CD4-positive, alpha-beta T cell (primary cell): ENCODE measurements at regions of chr4 and their contacts with region 1.

Region 1: DNA sequence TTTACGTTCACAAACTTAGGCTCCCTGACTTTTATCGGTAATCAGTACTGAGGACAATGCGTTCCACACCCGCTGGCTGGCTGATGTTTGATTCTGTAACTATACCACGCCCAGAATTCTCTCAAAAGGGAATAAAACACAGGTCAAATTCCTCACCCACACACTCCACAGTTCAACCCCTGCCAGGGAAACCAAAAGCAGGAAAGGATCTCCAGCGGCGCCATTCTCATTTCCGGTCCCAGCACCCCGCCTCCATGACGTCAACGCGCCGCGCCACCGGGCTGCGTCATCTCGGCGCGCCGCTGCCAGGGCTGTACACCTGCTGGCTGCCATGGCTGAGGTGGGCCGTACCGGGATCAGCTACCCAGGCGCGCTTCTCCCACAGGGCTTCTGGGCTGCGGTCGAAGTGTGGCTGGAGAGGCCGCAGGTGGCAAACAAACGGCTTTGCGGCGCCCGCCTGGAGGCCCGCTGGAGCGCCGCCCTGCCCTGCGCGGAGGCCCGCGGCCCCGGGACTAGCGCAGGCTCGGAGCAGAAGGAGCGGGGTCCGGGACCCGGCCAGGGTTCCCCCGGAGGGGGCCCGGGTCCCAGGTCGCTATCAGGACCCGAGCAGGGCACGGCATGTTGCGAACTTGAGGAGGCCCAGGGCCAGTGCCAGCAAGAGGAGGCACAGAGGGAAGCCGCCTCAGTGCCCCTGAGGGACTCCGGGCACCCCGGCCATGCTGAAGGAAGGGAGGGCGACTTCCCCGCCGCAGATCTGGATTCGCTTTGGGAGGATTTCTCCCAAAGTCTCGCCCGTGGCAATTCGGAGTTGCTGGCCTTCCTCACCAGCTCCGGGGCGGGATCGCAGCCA is at the starts of genes ACOX3 and TRMT44:
- DNase-seq: peak; percentile 86 to 99 (median 94)
- ATAC-seq: peak; percentile 88
- H3K4me3 ChIP-seq: peak within 1 kb of the TSS; percentile 97
- H3K4me3 Mint-ChIP-seq: peak within 1 kb of the TSS; percentile 99
- H3K27ac ChIP-seq: peak within 1 kb of the TSS; percentile 88 to 96
- H3K27ac Mint-ChIP-seq: peak within 1 kb of the TSS; percentile 99
- H3K4me1 ChIP-seq: peaks cover 53% of the 10 kb centered on the region
- H3K4me1 Mint-ChIP-seq: peaks cover 88% of the 10 kb centered on the region
- H3K27me3 ChIP-seq: no peaks in the 10 kb centered on the region
- H3K27me3 Mint-ChIP-seq: no peaks in the 10 kb centered on the region
- CTCF ChIP-seq: no peak
- total RNA-seq, gene ACOX3: 4.9 to 6.1 TPM
- total RNA-seq, gene TRMT44: 25.6 to 29.2 TPM

Region 2: GRCh38 chr4:7857238-7857701 is 583.4 kb before region 1 on chr4:
- CTCF ChIA-PET with region 1: no interaction called
- POLR2A ChIA-PET with region 1: no interaction called
- intact Hi-C with region 1: loop called in 1 of 2 experiments (anchors 10 kb)
- DNase-seq: no peak
- ATAC-seq: no peak
- H3K4me3 ChIP-seq: no peak overlapping the region
- H3K4me3 Mint-ChIP-seq: no peak overlapping the region
- H3K27ac ChIP-seq: no peak overlapping the region
- H3K27ac Mint-ChIP-seq: peak overlapping the region; percentile 93
- H3K4me1 ChIP-seq: peaks cover 54% of the 10 kb centered on the region
- H3K4me1 Mint-ChIP-seq: peaks cover 61% of the 10 kb centered on the region
- H3K27me3 ChIP-seq: no peaks in the 10 kb centered on the region
- H3K27me3 Mint-ChIP-seq: no peaks in the 10 kb centered on the region
- CTCF ChIP-seq: no peak

Region 3: GRCh38 chr4:8058031-8058479 is 382.7 kb before region 1 on chr4:
- CTCF ChIA-PET with region 1: no interaction called
- POLR2A ChIA-PET with region 1: no interaction called
- intact Hi-C with region 1: no loop called
- DNase-seq: no peak
- ATAC-seq: no peak
- H3K4me3 ChIP-seq: no peak overlapping the region
- H3K4me3 Mint-ChIP-seq: no peak overlapping the region
- H3K27ac ChIP-seq: no peak overlapping the region
- H3K27ac Mint-ChIP-seq: no peak overlapping the region
- H3K4me1 ChIP-seq: no peaks in the 10 kb centered on the region
- H3K4me1 Mint-ChIP-seq: no peaks in the 10 kb centered on the region
- H3K27me3 ChIP-seq: no peaks in the 10 kb centered on the region
- H3K27me3 Mint-ChIP-seq: no peaks in the 10 kb centered on the region
- CTCF ChIP-seq: no peak

Region 4: GRCh38 chr4:8428293-8429097 is 12.2 kb before region 1 on chr4:
- CTCF ChIA-PET with region 1: interaction called, 4 read pairs
- POLR2A ChIA-PET with region 1: interaction called, 25 read pairs
- intact Hi-C with region 1: loop called (anchors 1 kb)
- DNase-seq: peak; percentile 80 to 98 (median 90)
- ATAC-seq: peak; percentile 84
- H3K4me3 ChIP-seq: peak overlapping the region; percentile 75
- H3K4me3 Mint-ChIP-seq: peak overlapping the region; percentile 96
- H3K27ac ChIP-seq: no peak overlapping the region
- H3K27ac Mint-ChIP-seq: peak overlapping the region; percentile 85
- H3K4me1 ChIP-seq: peaks cover 22% of the 10 kb centered on the region
- H3K4me1 Mint-ChIP-seq: peaks cover 47% of the 10 kb centered on the region
- H3K27me3 ChIP-seq: no peaks in the 10 kb centered on the region
- H3K27me3 Mint-ChIP-seq: no peaks in the 10 kb centered on the region
- CTCF ChIP-seq: no peak